Activated CD4-positive, alpha-beta memory T cell treated with anti-CD3 and anti-CD28 coated beads for 36 hours (primary cell): ENCODE measurements at regions of chr17 and their contacts with region 1.

Region 1: GRCh38 chr17:63827002-63827771 is at the starts of genes FTSJ3 and PSMC5:
- DNase-seq: peak; percentile 97
- H3K4me3 Mint-ChIP-seq: peak within 1 kb of the TSS; percentile 94
- H3K27ac Mint-ChIP-seq: peak within 1 kb of the TSS; percentile 98
- H3K4me1 Mint-ChIP-seq: peaks cover 75% of the 10 kb centered on the region
- H3K27me3 Mint-ChIP-seq: no peaks in the 10 kb centered on the region
- total RNA-seq, gene FTSJ3: 41.5 to 42.8 TPM
- total RNA-seq, gene PSMC5: 165 to 171 TPM

Region 2: GRCh38 chr17:63571763-63572271 is 255.4 kb before region 1 on chr17:
- CTCF ChIA-PET with region 1: no interaction called
- POLR2A ChIA-PET with region 1: no interaction called
- intact Hi-C with region 1: no loop called
- DNase-seq: no peak
- H3K4me3 Mint-ChIP-seq: no peak overlapping the region
- H3K27ac Mint-ChIP-seq: peak overlapping the region; percentile 55
- H3K4me1 Mint-ChIP-seq: peaks cover 43% of the 10 kb centered on the region
- H3K27me3 Mint-ChIP-seq: no peaks in the 10 kb centered on the region

Region 3: DNA sequence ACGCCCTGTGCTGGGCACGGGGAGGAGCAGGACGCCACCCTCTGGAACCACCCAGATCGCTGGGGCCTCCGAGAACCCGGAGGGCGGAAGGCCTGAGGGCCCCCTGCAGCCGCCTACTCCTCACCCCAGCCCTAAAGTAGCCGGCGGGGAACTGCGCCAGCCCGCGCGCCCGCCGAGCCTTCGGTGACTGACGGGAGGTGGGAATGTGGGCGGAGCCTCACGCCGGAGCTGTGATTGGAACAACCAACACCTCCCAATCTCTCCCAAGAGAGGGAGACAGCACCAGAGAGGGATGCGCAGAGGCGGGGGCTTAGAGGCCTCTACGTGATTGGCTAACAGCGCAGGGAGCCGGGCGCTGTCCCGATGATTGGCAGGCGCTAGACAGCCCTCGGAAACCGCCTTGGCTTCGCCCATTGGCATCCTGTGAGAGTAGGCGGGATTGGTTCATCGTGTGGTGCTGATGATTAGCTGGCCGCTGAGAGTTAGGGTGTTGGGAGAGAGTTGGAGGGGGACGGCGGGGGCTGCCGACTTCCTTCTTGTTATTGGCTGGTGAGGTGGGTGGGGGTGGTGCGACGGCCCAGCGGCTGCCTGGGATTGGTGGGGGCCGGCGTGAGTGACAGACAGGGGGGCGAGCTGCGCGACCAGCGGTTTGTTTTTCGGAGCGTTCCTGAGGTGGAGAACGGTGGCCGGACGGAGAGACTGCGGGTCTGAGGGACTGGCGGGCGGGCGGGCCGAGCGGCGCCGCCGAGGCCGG is 205.2 kb before region 1 on chr17 and contains the start of gene MAP3K3:
- CTCF ChIA-PET with region 1: no interaction called
- POLR2A ChIA-PET with region 1: no interaction called
- intact Hi-C with region 1: loop called (anchors 5 kb)
- DNase-seq: peak; percentile 99
- H3K4me3 Mint-ChIP-seq: peak within 1 kb of the TSS; percentile 99
- H3K27ac Mint-ChIP-seq: peak within 1 kb of the TSS; percentile 87
- H3K4me1 Mint-ChIP-seq: peaks cover 38% of the 10 kb centered on the region
- H3K27me3 Mint-ChIP-seq: no peaks in the 10 kb centered on the region
- total RNA-seq, gene MAP3K3: 32.8 to 34.0 TPM

Region 4: DNA sequence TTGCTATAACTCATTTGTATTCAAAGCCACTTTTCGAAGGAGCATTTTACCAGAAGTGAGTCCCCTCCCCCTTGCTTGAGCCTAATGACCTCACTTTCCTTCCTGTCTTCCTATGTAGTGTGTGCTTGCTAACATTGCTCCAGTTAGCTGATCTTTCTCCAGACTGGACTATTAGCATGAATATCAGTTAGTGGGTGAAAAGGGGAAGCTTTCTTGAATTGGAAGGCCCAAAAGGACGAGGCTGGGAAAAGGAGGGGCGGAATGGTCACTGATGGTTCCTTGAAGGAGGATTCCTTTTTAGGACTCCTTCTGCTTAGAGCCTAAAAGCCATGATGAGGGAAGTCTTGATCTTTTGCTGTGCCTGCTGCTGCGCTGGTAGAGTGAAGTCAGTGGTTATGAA is 193.0 kb before region 1 on chr17:
- CTCF ChIA-PET with region 1: no interaction called
- POLR2A ChIA-PET with region 1: no interaction called
- intact Hi-C with region 1: no loop called
- DNase-seq: no peak
- H3K4me3 Mint-ChIP-seq: no peak overlapping the region
- H3K27ac Mint-ChIP-seq: no peak overlapping the region
- H3K4me1 Mint-ChIP-seq: peaks cover 22% of the 10 kb centered on the region
- H3K27me3 Mint-ChIP-seq: no peaks in the 10 kb centered on the region

Region 5: DNA sequence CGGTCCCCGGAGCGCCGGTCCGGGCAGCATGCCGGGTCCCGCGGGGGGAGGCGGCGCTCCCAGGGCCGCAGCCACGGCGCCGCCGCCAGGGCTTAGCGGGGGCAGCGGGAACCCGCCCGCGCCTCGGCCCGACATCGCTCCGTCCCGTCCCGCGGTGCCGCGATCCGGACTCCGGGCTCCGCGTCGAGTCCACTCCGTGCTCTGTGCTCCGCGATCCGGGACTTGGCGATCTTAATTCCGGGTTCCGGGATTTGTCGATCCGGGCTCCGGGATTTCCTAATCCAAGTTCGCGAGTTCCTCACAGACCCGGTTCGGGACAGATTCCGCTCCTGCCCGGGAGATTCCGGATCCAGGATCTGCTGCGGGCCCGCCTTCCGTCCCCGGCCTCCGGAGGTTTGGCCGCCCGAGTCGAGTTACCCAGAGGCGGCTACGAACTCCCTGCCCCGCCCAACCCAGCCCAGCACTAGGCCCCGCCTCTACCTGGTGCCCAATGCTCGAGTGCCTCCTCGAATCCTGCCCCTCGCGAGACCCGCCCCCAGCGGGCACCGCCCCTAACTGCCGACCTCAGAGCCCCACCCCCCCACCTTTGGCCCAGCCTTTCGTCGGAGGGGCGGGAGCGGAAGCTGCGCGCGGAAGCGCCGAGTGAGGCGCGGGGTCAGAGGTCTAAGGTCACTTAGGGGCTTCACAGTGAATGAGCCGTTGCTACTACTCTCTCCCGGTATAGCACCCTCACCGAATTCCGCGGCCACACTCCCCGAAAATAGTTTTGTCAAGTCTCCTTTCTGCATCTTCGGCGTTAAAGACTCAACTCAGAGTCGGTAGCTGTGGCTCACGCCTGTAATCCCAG is 15.6 kb after region 1 on chr17 and contains the start of gene SMARCD2:
- CTCF ChIA-PET with region 1: interaction called, 15 read pairs
- POLR2A ChIA-PET with region 1: interaction called, 29 read pairs
- intact Hi-C with region 1: loop called (anchors 1 kb)
- DNase-seq: peak; percentile 100
- H3K4me3 Mint-ChIP-seq: peak within 1 kb of the TSS; percentile 95
- H3K27ac Mint-ChIP-seq: peak within 1 kb of the TSS; percentile 95
- H3K4me1 Mint-ChIP-seq: peaks cover 34% of the 10 kb centered on the region
- H3K27me3 Mint-ChIP-seq: no peaks in the 10 kb centered on the region
- total RNA-seq, gene SMARCD2: 109 to 111 TPM